ENCODE measurements at regions of chr1 and their contacts with region 1.

Region 1: DNA sequence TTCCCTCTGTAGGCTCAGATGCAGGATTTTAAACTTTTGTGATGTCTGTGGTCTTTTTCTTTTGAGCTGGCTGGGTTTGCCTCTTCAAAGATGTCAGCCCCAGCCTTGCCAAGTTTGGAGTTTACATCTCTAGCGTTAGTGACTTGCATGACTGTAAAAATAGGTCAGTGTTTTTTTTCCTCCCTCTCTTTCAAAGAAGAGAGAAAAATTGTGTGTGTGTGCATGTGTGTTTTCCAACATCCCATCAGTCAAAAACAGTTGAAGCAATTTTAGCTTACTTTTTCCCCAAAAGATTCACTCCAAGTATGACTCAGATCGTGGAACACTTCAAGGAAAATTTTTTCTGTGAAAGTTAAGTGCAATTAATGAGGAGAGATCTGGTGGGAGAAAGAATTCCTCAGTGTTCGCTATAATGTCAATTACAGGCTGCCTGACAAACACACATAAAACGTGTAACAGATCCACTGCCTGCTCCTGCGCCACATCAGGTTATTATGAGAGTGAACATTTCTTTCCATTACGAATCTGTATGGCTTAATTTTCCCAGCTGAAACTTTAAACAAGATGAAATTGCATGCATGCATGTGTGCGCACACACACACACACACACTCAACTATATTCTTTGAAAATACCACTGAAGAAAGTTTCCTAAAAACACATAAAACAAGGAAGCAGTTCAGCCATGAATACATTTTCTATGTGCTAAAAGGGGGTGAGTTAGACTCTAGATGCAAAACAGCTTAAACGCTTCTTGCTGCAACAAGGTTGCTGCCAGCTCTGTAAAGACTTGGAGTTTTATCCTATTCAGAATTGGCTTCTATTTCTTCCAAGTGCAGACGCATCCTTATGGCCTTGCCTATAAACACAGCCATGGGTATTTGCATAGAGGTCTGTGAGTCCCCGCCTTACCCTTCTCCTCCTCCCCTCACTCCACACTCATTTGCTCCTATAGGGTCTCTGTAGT is 55.5 kb downstream of the TLR5 start:
- DNase-seq: no peak
- H3K4me3 ChIP-seq: no peak overlapping the region
- H3K27ac ChIP-seq: no peak overlapping the region
- H3K27me3 ChIP-seq: peaks cover 35% of the 10 kb centered on the region
- CTCF ChIP-seq: no peak

Region 2: DNA sequence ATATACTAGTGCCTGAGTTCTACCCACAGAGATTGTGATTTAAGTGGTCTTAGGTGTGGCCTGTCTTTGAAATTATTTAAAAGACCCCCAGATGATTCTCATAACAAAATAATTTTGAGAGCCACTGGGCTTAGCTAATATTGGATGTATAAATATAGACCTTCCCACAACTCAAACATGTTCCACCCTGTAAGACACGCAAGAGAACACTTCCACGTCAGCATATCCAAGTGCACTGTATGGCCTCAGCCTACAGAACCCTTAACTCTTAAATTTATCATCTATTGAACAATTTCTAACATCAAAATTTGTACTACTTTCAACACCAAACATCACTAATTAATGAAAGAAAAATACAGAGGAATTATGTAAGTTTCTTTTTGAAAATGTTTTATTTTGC is 348.1 kb before region 1 on chr1:
- CTCF ChIA-PET with region 1: interaction called, 45 read pairs
- POLR2A ChIA-PET with region 1: interaction called, 3 read pairs
- DNase-seq: no peak
- H3K4me3 ChIP-seq: no peak overlapping the region
- H3K27ac ChIP-seq: no peak overlapping the region
- H3K27me3 ChIP-seq: no peaks in the 10 kb centered on the region
- CTCF ChIP-seq: no peak

Region 3: GRCh38 chr1:222792744-222793143 is 294.8 kb before region 1 on chr1:
- CTCF ChIA-PET with region 1: interaction called, 118 read pairs
- POLR2A ChIA-PET with region 1: no interaction called
- DNase-seq: no peak
- H3K4me3 ChIP-seq: no peak overlapping the region
- H3K27ac ChIP-seq: no peak overlapping the region
- H3K27me3 ChIP-seq: no peaks in the 10 kb centered on the region
- CTCF ChIP-seq: peak; percentile 63

Region 4: GRCh38 chr1:223068900-223069665 is 18.5 kb before region 1 on chr1:
- CTCF ChIA-PET with region 1: interaction called, 13 read pairs
- POLR2A ChIA-PET with region 1: no interaction called
- DNase-seq: no peak
- H3K4me3 ChIP-seq: no peak overlapping the region
- H3K27ac ChIP-seq: no peak overlapping the region
- H3K27me3 ChIP-seq: peaks cover 9% of the 10 kb centered on the region
- CTCF ChIP-seq: no peak

Region 5: GRCh38 chr1:223102797-223103533 is 15.4 kb after region 1 on chr1:
- CTCF ChIA-PET with region 1: interaction called, 11 read pairs
- POLR2A ChIA-PET with region 1: no interaction called
- DNase-seq: no peak
- H3K4me3 ChIP-seq: no peak overlapping the region
- H3K27ac ChIP-seq: no peak overlapping the region
- H3K27me3 ChIP-seq: peaks cover 9% of the 10 kb centered on the region
- CTCF ChIP-seq: no peak

Region 6: GRCh38 chr1:223683586-223684487 is 596.3 kb after region 1 on chr1:
- CTCF ChIA-PET with region 1: interaction called, 18 read pairs
- POLR2A ChIA-PET with region 1: no interaction called
- DNase-seq: no peak
- H3K4me3 ChIP-seq: no peak overlapping the region
- H3K27ac ChIP-seq: no peak overlapping the region
- H3K27me3 ChIP-seq: peaks cover 17% of the 10 kb centered on the region
- CTCF ChIP-seq: peak; percentile 79